Caco-2 (cell line): ENCODE measurements at regions of chr1 and their contacts with region 1.

Region 1: DNA sequence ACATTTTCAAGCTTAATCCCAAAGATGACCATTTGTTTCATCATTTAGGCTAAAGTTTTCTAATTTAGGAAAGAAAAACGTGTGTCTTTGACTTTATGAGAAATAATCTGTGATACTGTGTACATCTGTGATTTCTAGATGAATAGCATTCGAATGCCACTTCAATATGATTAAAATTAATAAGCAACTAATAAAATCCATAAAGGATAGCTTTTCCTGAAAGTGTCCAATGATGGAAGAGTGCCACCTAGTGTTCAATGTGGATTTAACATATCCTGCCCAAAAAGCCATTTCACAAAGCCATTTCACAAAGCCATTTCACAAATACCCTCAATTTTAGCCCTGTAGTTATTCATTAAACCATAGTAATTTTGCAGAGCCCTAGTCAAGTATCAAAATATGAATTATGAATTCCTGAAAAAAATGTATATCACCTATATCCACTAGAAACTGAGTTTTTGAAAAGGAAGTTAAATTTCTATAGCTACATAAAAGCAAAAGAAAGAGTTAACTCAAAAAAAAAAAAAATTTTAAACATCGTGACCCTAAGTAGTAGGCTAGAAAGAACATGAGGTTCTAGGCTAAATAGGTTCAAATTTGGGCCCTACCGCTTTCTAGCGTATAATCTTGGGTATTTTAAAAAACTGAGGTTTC is 19.1 kb downstream of the NME7 start:
- DNase-seq: peak in 1 of 2 experiments; percentile 62
- H3K4me3 ChIP-seq: no peak overlapping the region
- H3K4me3 Mint-ChIP-seq: no peak overlapping the region
- H3K27ac Mint-ChIP-seq: no peak overlapping the region
- H3K4me1 ChIP-seq: peaks cover 30% of the 10 kb centered on the region
- H3K4me1 Mint-ChIP-seq: peaks cover 34% of the 10 kb centered on the region
- H3K27me3 ChIP-seq: no peaks in the 10 kb centered on the region
- H3K27me3 Mint-ChIP-seq: no peaks in the 10 kb centered on the region
- CTCF ChIP-seq: peak; percentile 67 to 78

Region 2: DNA sequence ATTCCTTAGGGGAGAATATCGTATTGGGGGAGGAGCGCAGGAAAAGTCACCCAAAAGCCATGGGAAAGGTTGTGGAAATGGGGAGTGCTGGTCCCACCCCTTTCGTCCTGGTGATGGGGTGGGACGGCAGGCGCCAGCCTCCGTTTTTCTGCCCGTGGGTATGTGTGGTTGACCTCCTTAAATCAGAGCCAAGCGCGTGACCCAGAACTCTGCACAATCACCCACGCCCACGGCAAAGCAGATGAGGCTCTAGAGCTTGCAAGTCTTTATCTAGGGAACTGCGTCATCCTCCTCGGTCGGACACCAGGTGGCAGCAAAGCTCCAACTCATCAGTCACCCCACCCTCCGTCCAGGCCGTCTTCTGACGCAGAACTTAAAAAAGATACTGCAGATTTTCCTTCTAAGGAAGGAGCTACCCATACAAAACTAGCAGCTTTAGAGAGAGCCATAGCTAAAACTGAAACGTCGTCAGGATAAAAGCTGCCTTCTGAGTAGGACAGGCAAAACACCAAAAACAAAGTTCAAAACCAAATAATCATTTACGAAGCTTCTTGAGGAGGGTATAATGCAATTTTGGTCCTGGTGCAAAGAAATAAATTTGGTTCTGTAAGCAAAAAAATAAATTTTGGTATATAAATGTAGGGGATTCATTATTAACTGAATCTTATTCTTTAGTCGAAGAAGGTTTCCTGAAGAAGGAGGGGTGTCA is 1005.8 kb before region 1 on chr1:
- CTCF ChIA-PET with region 1: interaction called, 11 read pairs
- POLR2A ChIA-PET with region 1: no interaction called
- intact Hi-C with region 1: loop called (anchors 1 kb)
- DNase-seq: peak; percentile 84
- H3K4me3 ChIP-seq: peak overlapping the region; percentile 15
- H3K4me3 Mint-ChIP-seq: peak overlapping the region; percentile 60
- H3K27ac Mint-ChIP-seq: no peak overlapping the region
- H3K4me1 ChIP-seq: peaks cover 5% of the 10 kb centered on the region; the same call in 1 of the 2 replicates
- H3K4me1 Mint-ChIP-seq: peaks cover 8% of the 10 kb centered on the region
- H3K27me3 ChIP-seq: no peaks in the 10 kb centered on the region
- H3K27me3 Mint-ChIP-seq: no peaks in the 10 kb centered on the region
- CTCF ChIP-seq: peak; percentile 77 to 86

Region 3: GRCh38 chr1:168734946-168735345 is 613.6 kb before region 1 on chr1:
- CTCF ChIA-PET with region 1: interaction called, 3 read pairs
- POLR2A ChIA-PET with region 1: no interaction called
- intact Hi-C with region 1: loop called (anchors 1 kb)
- DNase-seq: peak in 1 of 2 experiments; percentile 13
- H3K4me3 ChIP-seq: no peak overlapping the region
- H3K4me3 Mint-ChIP-seq: no peak overlapping the region
- H3K27ac Mint-ChIP-seq: peak overlapping the region; percentile 21
- H3K4me1 ChIP-seq: no peaks in the 10 kb centered on the region
- H3K4me1 Mint-ChIP-seq: peaks cover 9% of the 10 kb centered on the region
- H3K27me3 ChIP-seq: no peaks in the 10 kb centered on the region
- H3K27me3 Mint-ChIP-seq: no peaks in the 10 kb centered on the region
- CTCF ChIP-seq: peak; percentile 21 to 34

Region 4: DNA sequence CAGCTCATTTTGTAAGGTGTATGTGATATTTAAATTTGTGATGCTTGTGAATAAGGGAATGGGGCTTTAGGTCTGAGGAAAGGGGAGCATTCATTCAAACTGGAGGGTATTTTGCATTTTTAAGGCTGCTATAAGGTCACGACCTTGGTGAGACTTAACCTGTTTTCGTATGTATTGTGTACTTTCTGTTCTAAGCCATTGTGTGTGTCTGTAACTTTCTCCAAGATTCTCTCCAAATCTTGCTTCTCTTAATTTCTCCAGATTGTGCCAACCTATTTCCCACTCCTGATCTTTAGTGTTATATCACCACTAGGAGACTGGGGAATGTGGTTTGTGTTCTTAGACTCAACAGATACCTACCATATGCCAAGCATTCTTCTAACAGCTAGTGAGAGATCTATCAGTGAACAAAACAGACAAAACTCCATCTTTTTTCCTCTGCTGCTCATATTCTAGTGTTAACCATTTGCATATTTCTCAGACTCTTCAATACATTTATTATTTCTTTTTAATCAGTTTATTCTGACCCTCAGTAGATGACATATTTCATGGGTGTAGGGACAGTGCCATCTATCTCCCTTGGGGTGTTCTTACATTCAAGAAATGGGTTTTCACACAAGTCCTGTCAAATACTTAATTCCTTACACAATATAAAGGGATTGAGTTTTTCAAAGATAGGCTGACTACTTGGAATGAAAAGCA is 214.6 kb before region 1 on chr1:
- CTCF ChIA-PET with region 1: interaction called, 3 read pairs
- POLR2A ChIA-PET with region 1: no interaction called
- intact Hi-C with region 1: loop called (anchors 5 kb)
- DNase-seq: no peak
- H3K4me3 ChIP-seq: no peak overlapping the region
- H3K4me3 Mint-ChIP-seq: no peak overlapping the region
- H3K27ac Mint-ChIP-seq: peak overlapping the region; percentile 32
- H3K4me1 ChIP-seq: no peaks in the 10 kb centered on the region
- H3K4me1 Mint-ChIP-seq: no peaks in the 10 kb centered on the region
- H3K27me3 ChIP-seq: no peaks in the 10 kb centered on the region
- H3K27me3 Mint-ChIP-seq: no peaks in the 10 kb centered on the region
- CTCF ChIP-seq: peak in 1 of 2 experiments; percentile 15

Region 5: DNA sequence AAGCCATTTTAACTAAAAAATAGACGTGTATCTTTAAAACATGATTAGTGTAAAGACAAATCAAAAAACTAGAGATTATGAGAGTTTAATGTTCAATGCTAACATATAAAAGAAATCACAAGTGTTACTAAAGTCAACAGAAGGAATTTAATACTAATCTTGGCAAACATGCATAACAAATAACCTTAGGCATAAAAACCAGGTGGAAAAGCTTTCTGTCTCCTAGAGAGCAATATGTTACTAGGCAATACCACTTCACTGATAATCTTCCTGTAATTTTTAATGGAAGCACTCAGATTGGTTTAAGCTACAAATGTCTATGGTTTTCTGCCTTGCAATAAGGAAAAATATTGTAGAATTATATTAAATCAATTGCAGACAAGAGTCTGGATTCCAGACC is 102.8 kb before region 1 on chr1:
- CTCF ChIA-PET with region 1: no interaction called
- POLR2A ChIA-PET with region 1: no interaction called
- intact Hi-C with region 1: loop called (anchors 2 kb)
- DNase-seq: no peak
- H3K4me3 ChIP-seq: no peak overlapping the region
- H3K4me3 Mint-ChIP-seq: no peak overlapping the region
- H3K27ac Mint-ChIP-seq: no peak overlapping the region
- H3K4me1 ChIP-seq: peaks cover 8% of the 10 kb centered on the region
- H3K4me1 Mint-ChIP-seq: peaks cover 9% of the 10 kb centered on the region
- H3K27me3 ChIP-seq: no peaks in the 10 kb centered on the region
- H3K27me3 Mint-ChIP-seq: no peaks in the 10 kb centered on the region
- CTCF ChIP-seq: no peak